ENCODE measurements at regions of chr18 and their contacts with region 1.

Region 1: GRCh38 chr18:11040823-11041656 is 108.3 kb downstream of the PIEZO2 start:
- DNase-seq: peak; percentile 74
- H3K4me3 ChIP-seq: no peak overlapping the region
- H3K27ac ChIP-seq: no peak overlapping the region
- H3K4me1 ChIP-seq: peaks cover 9% of the 10 kb centered on the region
- CTCF ChIP-seq: peak; percentile 97

Region 2: GRCh38 chr18:10995550-10995949 is 45.5 kb before region 1 on chr18:
- CTCF ChIA-PET with region 1: no interaction called
- POLR2A ChIA-PET with region 1: no interaction called
- intact Hi-C with region 1: no loop called
- DNase-seq: no peak
- H3K4me3 ChIP-seq: no peak overlapping the region
- H3K27ac ChIP-seq: no peak overlapping the region
- H3K4me1 ChIP-seq: no peaks in the 10 kb centered on the region
- CTCF ChIP-seq: no peak

Region 3: DNA sequence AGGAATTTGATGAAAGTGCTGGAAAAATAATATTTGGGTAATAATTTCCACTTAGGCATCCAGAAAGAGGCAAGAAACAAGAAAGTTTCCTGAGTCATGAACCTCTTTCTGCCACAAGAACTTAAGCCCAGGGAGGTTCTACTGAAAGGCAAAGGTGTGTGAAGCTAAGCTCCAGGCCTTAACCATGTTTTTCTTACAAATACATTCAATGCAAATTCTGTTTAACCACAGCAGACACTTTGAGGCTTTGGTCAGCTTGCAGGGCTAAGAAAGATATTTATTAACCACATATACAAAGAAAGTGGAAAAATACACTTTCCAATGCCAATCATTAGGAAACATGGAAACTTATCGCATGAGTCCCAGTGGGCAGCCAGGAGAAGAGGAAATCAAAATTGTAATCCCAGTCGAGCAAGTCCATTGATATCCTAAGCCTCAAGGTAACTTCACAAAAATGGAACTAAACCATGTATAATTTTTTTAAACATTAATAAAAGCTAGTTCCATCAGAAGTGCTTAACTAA is 40.0 kb after region 1 on chr18:
- CTCF ChIA-PET with region 1: no interaction called
- POLR2A ChIA-PET with region 1: no interaction called
- intact Hi-C with region 1: no loop called
- DNase-seq: no peak
- H3K4me3 ChIP-seq: no peak overlapping the region
- H3K27ac ChIP-seq: no peak overlapping the region
- H3K4me1 ChIP-seq: no peaks in the 10 kb centered on the region
- CTCF ChIP-seq: no peak

Region 4: GRCh38 chr18:11149441-11150270 is 108.6 kb after region 1 on chr18 and contains the start of gene PIEZO2:
- CTCF ChIA-PET with region 1: no interaction called
- POLR2A ChIA-PET with region 1: interaction called, 3 read pairs
- intact Hi-C with region 1: loop called (anchors 5 kb)
- DNase-seq: no peak
- H3K4me3 ChIP-seq: no peak within 1 kb of the TSS
- H3K27ac ChIP-seq: no peak within 1 kb of the TSS
- H3K4me1 ChIP-seq: no peaks in the 10 kb centered on the region
- CTCF ChIP-seq: no peak
- total RNA-seq, gene PIEZO2: 0.95 and 2.6 TPM in 2 replicates